OCI-LY7 (cell line): ENCODE measurements at regions of chr12 and their contacts with region 1.

Region 1: DNA sequence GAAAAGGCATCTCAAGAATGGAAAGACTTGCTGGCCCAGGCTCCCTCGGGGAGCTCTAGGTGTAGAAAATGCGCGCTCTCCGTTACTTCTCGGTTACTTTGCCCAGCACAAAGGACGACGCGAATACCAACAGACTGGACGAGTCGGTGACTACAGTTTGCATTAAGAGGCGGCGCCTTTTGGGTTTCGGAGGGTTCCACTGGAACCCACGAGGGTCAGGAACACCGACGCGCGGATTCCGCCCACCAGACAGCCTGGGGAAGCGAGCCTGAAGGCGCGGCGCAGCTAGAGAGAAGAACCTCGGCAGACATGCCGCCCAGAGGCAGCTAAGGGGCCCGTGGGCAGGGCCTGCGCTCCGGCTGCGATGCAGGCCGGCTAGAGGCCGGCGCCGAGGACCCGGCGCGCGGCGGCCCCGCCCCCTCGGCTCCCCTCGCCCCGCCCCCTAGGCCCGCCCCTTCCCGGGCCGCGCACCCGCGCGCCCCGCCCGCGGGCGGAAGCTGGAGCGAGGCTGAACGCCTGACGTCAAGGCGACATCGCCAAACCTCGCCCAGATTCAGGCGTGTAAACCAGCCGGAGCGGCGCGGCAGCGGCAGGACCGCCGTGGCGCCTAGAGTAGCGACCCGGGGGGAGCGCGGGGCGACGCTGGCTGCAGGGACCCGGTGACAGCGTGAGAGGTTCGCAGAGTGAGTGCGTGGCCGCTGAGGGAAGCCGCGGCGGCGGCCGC is at the start of gene RAP1B:
- DNase-seq: peak; percentile 95
- H3K4me3 ChIP-seq: peak within 1 kb of the TSS; percentile 95
- H3K27ac ChIP-seq: peak within 1 kb of the TSS; percentile 88
- H3K4me1 ChIP-seq: peaks cover 35% of the 10 kb centered on the region
- CTCF ChIP-seq: no peak
- total RNA-seq, gene RAP1B: 100 and 101 TPM in 2 replicates

Region 2: GRCh38 chr12:68591734-68592418 is 18.7 kb before region 1 on chr12:
- CTCF ChIA-PET with region 1: no interaction called
- POLR2A ChIA-PET with region 1: interaction called, 64 read pairs
- intact Hi-C with region 1: no loop called
- DNase-seq: peak; percentile 85
- H3K4me3 ChIP-seq: peak overlapping the region; percentile 38
- H3K27ac ChIP-seq: peak overlapping the region; percentile 78
- H3K4me1 ChIP-seq: peaks cover 42% of the 10 kb centered on the region
- CTCF ChIP-seq: no peak

Region 3: DNA sequence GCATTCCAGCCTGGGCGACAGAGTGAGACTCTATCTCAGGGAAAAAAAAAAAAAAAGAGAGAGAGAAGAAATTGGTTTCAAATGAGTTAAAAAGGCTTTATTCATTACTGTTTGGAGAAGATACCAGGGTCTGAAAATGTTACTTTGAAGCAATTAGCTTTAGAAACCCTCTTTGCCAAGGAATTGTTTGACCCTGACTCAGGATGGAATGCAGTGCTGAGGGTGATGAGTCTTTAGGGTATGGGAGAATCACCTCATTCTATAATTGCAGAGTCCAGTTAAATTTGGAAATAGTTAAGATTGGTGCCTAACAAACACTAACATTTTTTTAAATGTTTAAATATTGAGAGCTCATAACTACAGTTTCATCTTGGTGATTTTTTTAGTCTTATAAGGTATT is 13.5 kb after region 1 on chr12:
- CTCF ChIA-PET with region 1: no interaction called
- POLR2A ChIA-PET with region 1: interaction called, 49 read pairs
- intact Hi-C with region 1: no loop called
- DNase-seq: no peak
- H3K4me3 ChIP-seq: no peak overlapping the region
- H3K27ac ChIP-seq: no peak overlapping the region
- H3K4me1 ChIP-seq: peaks cover 48% of the 10 kb centered on the region
- CTCF ChIP-seq: no peak

Region 4: DNA sequence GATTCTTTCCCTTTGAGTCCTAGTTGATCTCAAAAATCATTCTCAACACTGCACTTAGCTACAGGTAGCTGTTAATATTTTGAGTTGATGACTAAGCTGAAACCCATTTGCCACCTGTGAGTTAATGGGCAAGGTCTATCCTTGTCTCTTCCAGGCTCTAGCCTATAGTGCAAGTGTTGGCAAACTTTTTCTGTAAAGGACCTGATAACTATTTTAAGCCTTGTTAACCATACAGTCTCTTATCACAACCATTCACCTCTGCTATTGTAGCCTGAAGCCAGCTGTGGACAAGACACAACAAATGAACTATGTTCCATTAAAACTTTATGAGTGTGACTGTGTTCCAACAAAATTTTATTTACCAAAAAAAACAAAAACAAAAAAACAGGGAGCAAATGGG is 19.5 kb after region 1 on chr12:
- CTCF ChIA-PET with region 1: no interaction called
- POLR2A ChIA-PET with region 1: interaction called, 49 read pairs
- intact Hi-C with region 1: loop called (anchors 2 kb)
- DNase-seq: no peak
- H3K4me3 ChIP-seq: peak overlapping the region; percentile 21
- H3K27ac ChIP-seq: peak overlapping the region; percentile 62
- H3K4me1 ChIP-seq: peaks cover 68% of the 10 kb centered on the region
- CTCF ChIP-seq: no peak

Region 5: DNA sequence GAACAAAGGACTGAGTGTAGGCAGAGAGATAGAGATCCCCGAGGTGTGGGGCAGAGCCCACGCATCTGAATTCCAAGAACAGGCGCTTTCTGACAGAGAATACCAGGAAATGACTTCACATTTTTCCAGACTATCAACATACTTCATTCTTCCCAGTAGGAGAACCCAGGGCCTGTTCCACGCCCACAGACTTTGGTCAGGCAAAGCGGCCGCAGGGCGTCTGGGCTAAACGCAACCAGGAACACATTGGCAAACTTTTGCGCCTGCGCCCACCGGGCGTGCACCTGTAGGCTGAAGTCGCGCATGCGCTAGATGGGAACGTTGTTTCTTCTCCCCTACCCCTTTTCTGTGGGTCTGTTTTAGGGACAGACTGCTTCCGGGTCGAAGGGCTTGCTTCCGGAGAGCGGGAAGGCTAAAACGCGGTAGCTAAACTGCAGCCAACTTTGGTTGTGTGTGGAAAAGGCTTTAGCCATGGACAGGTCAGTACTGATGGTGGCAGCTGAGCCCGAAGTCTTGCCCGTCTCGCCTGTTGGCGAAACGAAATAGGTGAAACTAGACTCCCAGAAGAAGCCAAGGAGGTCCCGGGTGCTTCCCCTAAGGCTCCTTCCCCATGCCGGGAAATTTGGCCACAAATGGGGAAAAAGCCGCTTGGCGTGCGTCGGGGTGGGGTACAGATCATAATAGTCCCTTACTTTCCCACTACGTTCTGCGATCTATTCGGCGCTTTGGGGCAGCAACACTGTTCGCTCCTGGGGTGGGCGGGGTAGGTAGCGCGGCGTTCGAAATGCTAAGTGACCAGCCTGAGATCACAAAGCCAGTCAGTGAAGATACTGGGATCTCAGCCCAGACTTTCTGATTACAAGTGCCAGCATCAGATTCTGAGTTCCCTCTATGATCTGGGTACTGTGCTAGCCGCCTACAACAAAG is 76.3 kb after region 1 on chr12 and contains the start of gene NUP107:
- CTCF ChIA-PET with region 1: no interaction called
- POLR2A ChIA-PET with region 1: interaction called, 5 read pairs
- intact Hi-C with region 1: loop called (anchors 2 kb)
- DNase-seq: peak; percentile 99
- H3K4me3 ChIP-seq: peak within 1 kb of the TSS; percentile 98
- H3K27ac ChIP-seq: peak within 1 kb of the TSS; percentile 34
- H3K4me1 ChIP-seq: peaks cover 21% of the 10 kb centered on the region
- CTCF ChIP-seq: no peak
- total RNA-seq, gene NUP107: 106 and 113 TPM in 2 replicates

Region 6: GRCh38 chr12:68745904-68746571 is 135.5 kb after region 1 on chr12 and contains the start of gene SLC35E3:
- CTCF ChIA-PET with region 1: no interaction called
- POLR2A ChIA-PET with region 1: no interaction called
- intact Hi-C with region 1: loop called (anchors 5 kb)
- DNase-seq: peak; percentile 96
- H3K4me3 ChIP-seq: peak within 1 kb of the TSS; percentile 92
- H3K27ac ChIP-seq: peak within 1 kb of the TSS; percentile 59
- H3K4me1 ChIP-seq: peaks cover 46% of the 10 kb centered on the region
- CTCF ChIP-seq: no peak
- total RNA-seq, gene SLC35E3: 24.6 and 26.6 TPM in 2 replicates

Region 7: DNA sequence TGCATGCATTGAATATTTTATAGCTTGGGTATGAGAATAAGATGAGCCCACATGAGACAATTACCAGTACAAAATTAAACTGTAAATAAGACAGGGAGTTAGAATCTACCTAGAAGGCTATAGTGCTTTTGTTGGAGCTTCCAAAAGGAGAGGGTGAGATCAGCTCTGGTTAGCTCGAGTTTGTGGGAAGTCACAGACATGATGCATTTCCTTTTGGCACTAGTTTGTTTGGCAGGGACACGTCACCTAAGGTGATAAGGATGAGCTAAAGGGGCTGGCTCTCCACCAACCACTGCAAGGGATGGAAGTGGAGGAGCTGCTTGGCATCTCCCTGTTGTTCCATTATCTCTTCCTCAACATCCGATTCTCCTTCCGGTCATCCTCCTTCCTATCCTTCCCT is 371.0 kb after region 1 on chr12:
- CTCF ChIA-PET with region 1: no interaction called
- POLR2A ChIA-PET with region 1: no interaction called
- intact Hi-C with region 1: no loop called
- DNase-seq: no peak
- H3K4me3 ChIP-seq: no peak overlapping the region
- H3K27ac ChIP-seq: no peak overlapping the region
- H3K4me1 ChIP-seq: peaks cover 11% of the 10 kb centered on the region
- CTCF ChIP-seq: no peak